Ovary (tissue), 10 donors: ENCODE measurements at regions of chr16 and their contacts with region 1.

Region 1: GRCh38 chr16:51464996-51465395 is 313.9 kb upstream of the SALL1 start:
- DNase-seq: no peak
- H3K4me3 ChIP-seq: no peak overlapping the region
- H3K27ac ChIP-seq: no peak overlapping the region
- H3K4me1 ChIP-seq: peaks cover 1% of the 10 kb centered on the region
- H3K27me3 ChIP-seq: no peaks in the 10 kb centered on the region
- CTCF ChIP-seq: no peak
- EP300 ChIP-seq: no peak
- POLR2A ChIP-seq: no peak

Region 2: DNA sequence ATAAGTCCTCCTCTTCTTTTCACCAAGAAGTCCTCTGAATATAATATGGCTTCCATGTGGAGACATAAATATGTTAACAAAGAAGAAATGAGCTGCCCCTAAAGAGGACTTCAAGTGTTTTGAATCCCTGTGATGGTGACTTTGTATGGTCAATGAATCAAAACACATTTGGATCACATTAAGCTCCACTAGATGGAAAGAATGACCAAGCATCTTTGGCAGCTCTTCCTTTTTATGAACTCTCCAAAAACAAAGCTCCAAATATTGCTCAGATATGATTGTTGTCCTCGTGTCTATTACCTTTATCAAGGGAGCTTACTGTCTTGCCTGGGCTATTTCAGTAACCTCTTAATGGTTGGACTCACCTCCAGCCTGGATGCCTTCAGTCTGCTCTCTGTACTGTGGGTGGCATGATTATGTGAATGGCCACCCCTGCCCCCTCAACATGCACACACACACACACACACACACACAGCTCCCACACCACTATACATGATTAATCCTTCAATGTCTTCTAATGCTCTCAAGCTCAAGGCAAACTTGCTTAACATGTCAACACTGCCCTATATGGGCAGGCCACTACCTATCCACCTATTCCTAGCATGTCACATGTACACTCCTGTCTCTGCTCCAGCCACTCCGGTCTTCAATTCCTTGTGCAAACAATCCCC is 32.7 kb after region 1 on chr16:
- intact Hi-C with region 1: loop called in 1 of 4 experiments (anchors 1 kb)
- DNase-seq: no peak
- H3K4me3 ChIP-seq: no peak overlapping the region
- H3K27ac ChIP-seq: no peak overlapping the region
- H3K4me1 ChIP-seq: no peaks in the 10 kb centered on the region
- H3K27me3 ChIP-seq: no peaks in the 10 kb centered on the region
- CTCF ChIP-seq: no peak
- EP300 ChIP-seq: no peak
- POLR2A ChIP-seq: no peak

Region 3: DNA sequence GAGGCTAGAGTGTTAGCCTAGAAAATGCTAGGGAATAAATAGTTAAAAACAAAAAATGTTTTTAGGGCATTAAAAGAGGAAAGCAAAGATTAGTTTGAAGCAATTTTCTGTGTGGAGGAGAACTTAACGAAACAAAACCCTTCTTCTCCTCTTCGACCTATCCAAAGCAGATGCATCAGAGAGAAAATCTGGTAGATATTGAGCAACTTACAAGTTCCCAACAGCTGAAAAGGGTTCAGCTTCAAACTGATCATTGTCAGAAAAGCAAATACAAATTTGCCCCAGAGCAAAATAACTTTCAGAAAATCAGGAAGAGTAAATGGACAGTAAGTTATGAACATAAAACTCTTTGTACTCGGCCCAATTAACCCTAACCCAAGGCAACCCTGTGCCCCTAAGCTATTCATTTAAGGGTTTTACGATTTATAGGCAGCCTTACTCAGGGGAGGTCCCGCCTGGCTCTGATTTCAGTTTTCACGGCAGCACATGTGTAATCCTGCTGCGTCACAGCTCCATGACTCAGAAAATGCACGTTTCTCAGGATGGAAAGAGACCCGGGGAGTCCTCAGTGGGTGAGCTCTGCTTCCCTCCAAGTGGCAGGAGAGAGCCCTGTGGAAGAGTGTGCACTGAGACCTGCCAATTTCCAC is 91.8 kb after region 1 on chr16:
- intact Hi-C with region 1: no loop called
- DNase-seq: peak; percentile 21 to 65 (median 60)
- H3K4me3 ChIP-seq: no peak overlapping the region
- H3K27ac ChIP-seq: no peak overlapping the region
- H3K4me1 ChIP-seq: no peaks in the 10 kb centered on the region
- H3K27me3 ChIP-seq: no peaks in the 10 kb centered on the region
- CTCF ChIP-seq: no peak
- EP300 ChIP-seq: no peak
- POLR2A ChIP-seq: no peak

Region 4: GRCh38 chr16:51607201-51607646 is 142.2 kb after region 1 on chr16:
- intact Hi-C with region 1: no loop called
- DNase-seq: no peak
- H3K4me3 ChIP-seq: no peak overlapping the region
- H3K27ac ChIP-seq: no peak overlapping the region
- H3K4me1 ChIP-seq: no peaks in the 10 kb centered on the region
- H3K27me3 ChIP-seq: no peaks in the 10 kb centered on the region
- CTCF ChIP-seq: no peak
- EP300 ChIP-seq: no peak
- POLR2A ChIP-seq: no peak